Common myeloid progenitor, CD34-positive (primary cell): ENCODE measurements at regions of chr10 and their contacts with region 1.

Region 1: DNA sequence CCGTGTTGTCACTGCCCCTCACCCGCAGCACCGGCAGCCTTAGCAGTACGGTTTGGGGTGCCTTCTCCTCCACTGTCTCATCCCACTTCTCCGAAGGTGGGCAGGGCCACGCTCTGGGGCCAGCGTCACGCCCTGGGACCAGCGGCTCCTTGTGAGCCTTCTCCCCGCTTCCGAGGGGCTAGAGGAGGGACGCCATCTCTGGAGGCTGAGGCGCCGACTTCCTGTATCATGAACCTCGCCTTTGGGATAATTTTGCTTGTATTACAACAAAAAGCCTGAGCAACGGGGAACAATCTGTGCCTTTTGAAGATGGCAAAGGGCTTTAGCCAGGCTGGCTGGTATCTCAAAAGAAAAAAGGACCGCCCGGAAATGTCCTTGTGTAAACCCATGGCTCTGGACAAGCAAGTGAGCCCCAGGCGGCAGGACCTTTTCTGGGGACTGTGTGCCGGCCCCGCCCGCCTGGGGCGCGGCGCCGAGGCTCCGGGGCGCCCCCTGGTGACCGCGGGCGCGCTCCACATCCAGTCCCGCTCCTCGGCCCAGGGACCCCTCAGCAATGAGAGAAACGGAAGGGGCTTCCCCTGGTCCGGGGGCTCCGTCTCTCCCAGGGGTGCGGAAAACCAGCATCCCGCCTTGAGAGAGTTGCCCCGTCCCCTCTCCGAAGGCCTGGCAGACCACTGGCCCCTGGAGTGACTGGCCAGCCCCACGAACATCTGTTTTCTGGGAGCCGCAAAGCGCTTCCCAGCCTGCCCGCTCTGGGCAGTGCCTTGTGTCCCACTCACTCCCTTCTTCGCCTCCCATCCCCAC is 3.8 kb downstream of the DEPP1 start:
- DNase-seq: peak in 2 of 3 donors; percentile 61 to 62
- H3K4me3 ChIP-seq: peak overlapping the region in 5 of 7 experiments; percentile 49 to 73 (median 59)
- H3K27ac ChIP-seq: no peak overlapping the region
- H3K4me1 ChIP-seq: peaks cover 4 to 67% (median 61%) of the 10 kb centered on the region in 4 experiments
- H3K27me3 ChIP-seq: no peaks in the 10 kb centered on the region

Region 2: DNA sequence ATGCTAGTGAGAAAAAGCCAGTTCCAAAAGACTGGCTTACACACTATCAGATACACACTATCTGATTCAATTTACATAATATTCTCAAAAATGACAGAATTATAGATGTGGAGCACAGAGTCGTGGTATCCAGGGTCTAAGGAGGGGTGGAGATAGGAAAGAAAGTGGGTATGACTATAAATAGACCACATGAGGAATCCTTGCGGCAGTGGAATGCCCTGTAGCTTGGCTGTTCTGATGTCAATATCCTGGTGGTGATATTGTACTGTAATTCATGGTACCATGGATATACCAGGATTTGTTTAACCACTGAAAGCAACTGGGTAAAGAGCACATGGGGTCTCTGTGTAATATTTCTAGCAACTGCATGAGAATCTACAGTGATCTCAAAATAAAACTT is 131.3 kb before region 1 on chr10:
- CTCF ChIA-PET with region 1: no interaction called
- POLR2A ChIA-PET with region 1: no interaction called
- DNase-seq: no peak
- H3K4me3 ChIP-seq: no peak overlapping the region
- H3K27ac ChIP-seq: no peak overlapping the region
- H3K4me1 ChIP-seq: no peaks in the 10 kb centered on the region
- H3K27me3 ChIP-seq: no peaks in the 10 kb centered on the region

Region 3: DNA sequence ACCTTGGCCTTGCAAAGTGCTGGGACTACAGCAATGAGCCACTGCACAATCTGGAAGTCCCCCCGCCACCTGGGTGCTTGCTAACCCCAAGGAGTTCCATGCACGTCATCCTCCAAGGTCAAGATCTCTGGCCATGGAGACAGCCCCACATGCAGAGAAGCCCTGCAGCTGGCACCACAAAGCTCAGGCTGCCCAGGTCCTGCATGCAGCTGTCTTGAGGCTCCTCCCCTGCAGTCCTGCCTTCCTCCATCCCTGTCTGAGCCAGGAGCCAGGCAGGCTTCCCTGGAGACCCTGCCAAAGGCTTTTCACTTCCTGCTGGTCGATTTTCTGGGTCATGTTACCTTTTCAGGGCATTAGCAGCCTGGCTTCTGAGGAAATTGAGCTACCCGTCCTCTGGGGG is 76.2 kb before region 1 on chr10:
- CTCF ChIA-PET with region 1: no interaction called
- POLR2A ChIA-PET with region 1: no interaction called
- DNase-seq: no peak
- H3K4me3 ChIP-seq: no peak overlapping the region
- H3K27ac ChIP-seq: no peak overlapping the region
- H3K4me1 ChIP-seq: peaks cover 0 to 9% (median under 1%) of the 10 kb centered on the region in 4 experiments
- H3K27me3 ChIP-seq: no peaks in the 10 kb centered on the region

Region 4: GRCh38 chr10:44962870-44963738 is 11.7 kb before region 1 on chr10:
- CTCF ChIA-PET with region 1: interaction called, 21 read pairs
- POLR2A ChIA-PET with region 1: interaction called, 12 read pairs
- DNase-seq: peak in 2 of 3 donors; percentile 42 to 50
- H3K4me3 ChIP-seq: no peak overlapping the region
- H3K27ac ChIP-seq: no peak overlapping the region
- H3K4me1 ChIP-seq: peaks cover 19 to 77% (median 40%) of the 10 kb centered on the region in 4 experiments
- H3K27me3 ChIP-seq: no peaks in the 10 kb centered on the region

Region 5: DNA sequence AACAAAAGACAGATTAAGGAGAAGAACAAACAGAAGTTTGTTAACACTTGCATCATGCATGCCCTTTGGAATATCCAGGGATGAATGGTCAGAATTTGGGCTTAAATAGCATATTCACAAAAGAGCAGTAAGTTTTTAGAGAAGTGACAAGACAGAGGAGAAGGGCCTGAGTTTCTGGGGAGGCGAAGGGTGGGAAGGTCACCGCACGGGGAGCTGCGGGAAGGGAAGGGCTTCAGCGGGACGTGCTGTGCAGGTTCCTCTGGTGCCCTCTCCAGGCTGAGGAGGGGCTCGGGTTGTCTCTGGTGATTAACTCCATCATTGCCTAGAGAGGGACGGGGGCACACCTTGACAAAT is 15.4 kb after region 1 on chr10:
- CTCF ChIA-PET with region 1: interaction called, 44 read pairs
- POLR2A ChIA-PET with region 1: interaction called, 12 read pairs
- DNase-seq: peak; percentile 62 to 73 (median 69)
- H3K4me3 ChIP-seq: no peak overlapping the region
- H3K27ac ChIP-seq: no peak overlapping the region
- H3K4me1 ChIP-seq: peaks cover 0 to 41% (median 22%) of the 10 kb centered on the region in 4 experiments
- H3K27me3 ChIP-seq: no peaks in the 10 kb centered on the region

Region 6: DNA sequence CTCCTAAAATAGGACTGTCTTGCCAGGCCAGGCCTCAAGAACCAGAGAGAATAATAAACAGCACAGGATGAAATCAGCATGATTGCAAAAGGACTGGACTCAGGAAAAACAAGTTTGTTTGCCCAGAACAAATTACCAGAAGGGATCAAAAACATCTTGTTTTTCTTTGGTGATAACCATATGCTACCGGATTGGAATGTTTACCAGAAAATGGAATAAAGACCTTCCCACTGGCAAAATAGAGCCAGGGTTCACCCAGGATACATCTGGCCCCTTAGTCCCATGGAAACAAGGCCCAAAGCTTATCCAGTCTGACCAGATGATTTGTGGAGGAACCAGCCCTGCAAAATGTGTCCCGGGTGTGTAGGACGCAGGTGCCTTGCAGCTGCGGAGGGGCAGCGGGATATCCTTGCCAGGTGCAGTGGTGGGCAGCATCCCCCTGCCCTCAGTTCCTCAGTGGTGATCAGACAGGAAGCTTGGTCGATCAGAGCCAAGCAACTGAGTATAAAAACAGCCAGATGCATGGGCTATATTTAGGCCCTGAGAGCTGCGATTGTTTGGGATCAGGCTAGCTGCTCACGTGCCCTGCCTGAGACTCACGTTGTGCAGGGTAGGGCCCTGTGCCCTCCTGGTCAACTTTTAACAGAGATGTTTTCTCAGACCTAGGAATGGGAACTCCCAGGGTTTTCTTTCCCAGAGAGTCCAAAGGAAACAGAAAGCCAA is 21.2 kb after region 1 on chr10:
- CTCF ChIA-PET with region 1: interaction called, 44 read pairs
- POLR2A ChIA-PET with region 1: interaction called, 12 read pairs
- DNase-seq: peak in 2 of 3 donors; percentile 82 to 90
- H3K4me3 ChIP-seq: peak overlapping the region in 4 of 7 experiments; percentile 2 to 35 (median 27)
- H3K27ac ChIP-seq: peak overlapping the region in 1 of 2 experiments; percentile 36
- H3K4me1 ChIP-seq: peaks cover 18 to 74% (median 53%) of the 10 kb centered on the region in 4 experiments
- H3K27me3 ChIP-seq: no peaks in the 10 kb centered on the region